IMR-90 (cell line): ENCODE measurements at regions of chr16 and their contacts with region 1.

Region 1: GRCh38 chr16:8905168-8905762 is 23.1 kb downstream of the LITAFD start:
- DNase-seq: peak; percentile 45
- ATAC-seq: peak; percentile 72
- H3K4me3 ChIP-seq: no peak overlapping the region
- H3K27ac ChIP-seq: no peak overlapping the region
- H3K4me1 ChIP-seq: no peaks in the 10 kb centered on the region
- H3K27me3 ChIP-seq: no peaks in the 10 kb centered on the region
- CTCF ChIP-seq: peak; percentile 49
- POLR2A ChIP-seq: no peak
- RAD21 ChIP-seq: peak; percentile 58

Region 2: GRCh38 chr16:8674413-8675022 is 230.7 kb before region 1 on chr16 and contains the start of gene ABAT:
- CTCF ChIA-PET with region 1: no interaction called
- POLR2A ChIA-PET with region 1: no interaction called
- dilution Hi-C with region 1: no loop called
- in situ Hi-C with region 1: no loop called
- intact Hi-C with region 1: no loop called
- DNase-seq: peak; percentile 69
- ATAC-seq: peak; percentile 99
- H3K4me3 ChIP-seq: peak within 1 kb of the TSS; percentile 90
- H3K27ac ChIP-seq: no peak within 1 kb of the TSS
- H3K4me1 ChIP-seq: peaks cover 5% of the 10 kb centered on the region
- H3K27me3 ChIP-seq: no peaks in the 10 kb centered on the region; the same call in 1 of the 2 replicates
- CTCF ChIP-seq: no peak
- POLR2A ChIP-seq: no peak
- RAD21 ChIP-seq: no peak
- total RNA-seq, gene ABAT: 4.4 and 4.5 TPM in 2 replicates

Region 3: DNA sequence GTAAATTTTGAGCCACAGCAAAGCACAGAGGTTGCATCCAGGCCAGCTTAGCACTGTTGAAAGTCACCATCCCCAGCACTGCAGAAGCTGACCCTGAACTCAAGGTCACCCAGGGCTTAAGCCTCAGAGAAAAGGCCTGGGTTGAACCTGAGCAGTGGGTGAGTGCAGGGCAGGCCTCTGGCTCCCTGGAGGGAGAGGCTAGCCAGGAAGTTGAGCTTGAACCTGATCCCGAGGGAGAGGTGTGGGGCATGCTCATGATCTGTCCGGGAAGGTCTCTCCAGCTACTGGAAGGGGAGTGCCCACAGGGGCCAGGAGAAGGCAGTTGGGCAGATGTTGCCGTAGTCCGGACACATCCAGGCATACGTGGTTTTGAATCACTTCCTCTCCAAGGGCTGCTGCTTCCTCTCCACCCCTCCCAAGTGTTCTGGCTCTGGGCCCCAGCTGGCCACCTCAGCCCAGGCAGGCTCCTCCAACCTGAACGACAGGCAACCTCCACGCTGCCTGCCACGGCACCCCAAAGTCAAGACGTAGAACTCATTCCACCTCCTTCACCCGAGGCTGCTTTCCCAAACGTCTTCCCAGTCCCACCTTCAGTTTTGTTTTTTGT is 54.9 kb before region 1 on chr16:
- CTCF ChIA-PET with region 1: no interaction called
- POLR2A ChIA-PET with region 1: no interaction called
- dilution Hi-C with region 1: no loop called
- in situ Hi-C with region 1: no loop called
- intact Hi-C with region 1: no loop called
- DNase-seq: peak; percentile 87
- ATAC-seq: peak; percentile 45
- H3K4me3 ChIP-seq: no peak overlapping the region
- H3K27ac ChIP-seq: peak overlapping the region; percentile 72
- H3K4me1 ChIP-seq: peaks cover 23% of the 10 kb centered on the region
- H3K27me3 ChIP-seq: no peaks in the 10 kb centered on the region
- CTCF ChIP-seq: no peak
- POLR2A ChIP-seq: no peak; the same call in 1 of the 2 replicates
- RAD21 ChIP-seq: no peak

Region 4: GRCh38 chr16:9008601-9009260 is 103.5 kb after region 1 on chr16:
- CTCF ChIA-PET with region 1: interaction called, 8 read pairs
- POLR2A ChIA-PET with region 1: no interaction called
- dilution Hi-C with region 1: no loop called
- in situ Hi-C with region 1: loop called (anchors 5 kb)
- intact Hi-C with region 1: loop called (anchors 1 kb)
- DNase-seq: peak; percentile 56
- ATAC-seq: peak; percentile 97
- H3K4me3 ChIP-seq: no peak overlapping the region
- H3K27ac ChIP-seq: no peak overlapping the region
- H3K4me1 ChIP-seq: peaks cover 2% of the 10 kb centered on the region; the same call in 1 of the 2 replicates
- H3K27me3 ChIP-seq: no peaks in the 10 kb centered on the region
- CTCF ChIP-seq: peak; percentile 76
- POLR2A ChIP-seq: peak; percentile 30; the same call in 1 of the 2 replicates
- RAD21 ChIP-seq: peak; percentile 81

Region 5: GRCh38 chr16:9134739-9135138 is 229.5 kb after region 1 on chr16:
- CTCF ChIA-PET with region 1: no interaction called
- POLR2A ChIA-PET with region 1: no interaction called
- dilution Hi-C with region 1: no loop called
- in situ Hi-C with region 1: no loop called
- intact Hi-C with region 1: loop called (anchors 2 kb)
- DNase-seq: peak; percentile 55
- ATAC-seq: peak; percentile 64
- H3K4me3 ChIP-seq: no peak overlapping the region
- H3K27ac ChIP-seq: no peak overlapping the region
- H3K4me1 ChIP-seq: no peaks in the 10 kb centered on the region
- H3K27me3 ChIP-seq: no peaks in the 10 kb centered on the region
- CTCF ChIP-seq: peak; percentile 61
- POLR2A ChIP-seq: no peak
- RAD21 ChIP-seq: peak; percentile 73